ENCODE measurements at regions of chr11 and their contacts with region 1.

Region 1: GRCh38 chr11:103619480-103619879 is 417.0 kb upstream of the DDI1 start:
- DNase-seq: no peak
- ATAC-seq: no peak
- H3K4me3 Mint-ChIP-seq: no peak overlapping the region
- H3K27ac Mint-ChIP-seq: no peak overlapping the region
- H3K4me1 Mint-ChIP-seq: no peaks in the 10 kb centered on the region
- H3K27me3 Mint-ChIP-seq: no peaks in the 10 kb centered on the region
- CTCF ChIP-seq: no peak

Region 2: GRCh38 chr11:103637295-103637694 is 17.8 kb after region 1 on chr11:
- CTCF ChIA-PET with region 1: no interaction called
- POLR2A ChIA-PET with region 1: no interaction called
- intact Hi-C with region 1: no loop called
- DNase-seq: no peak
- ATAC-seq: no peak
- H3K4me3 Mint-ChIP-seq: no peak overlapping the region
- H3K27ac Mint-ChIP-seq: no peak overlapping the region
- H3K4me1 Mint-ChIP-seq: no peaks in the 10 kb centered on the region
- H3K27me3 Mint-ChIP-seq: peaks cover 2% of the 10 kb centered on the region
- CTCF ChIP-seq: no peak

Region 3: DNA sequence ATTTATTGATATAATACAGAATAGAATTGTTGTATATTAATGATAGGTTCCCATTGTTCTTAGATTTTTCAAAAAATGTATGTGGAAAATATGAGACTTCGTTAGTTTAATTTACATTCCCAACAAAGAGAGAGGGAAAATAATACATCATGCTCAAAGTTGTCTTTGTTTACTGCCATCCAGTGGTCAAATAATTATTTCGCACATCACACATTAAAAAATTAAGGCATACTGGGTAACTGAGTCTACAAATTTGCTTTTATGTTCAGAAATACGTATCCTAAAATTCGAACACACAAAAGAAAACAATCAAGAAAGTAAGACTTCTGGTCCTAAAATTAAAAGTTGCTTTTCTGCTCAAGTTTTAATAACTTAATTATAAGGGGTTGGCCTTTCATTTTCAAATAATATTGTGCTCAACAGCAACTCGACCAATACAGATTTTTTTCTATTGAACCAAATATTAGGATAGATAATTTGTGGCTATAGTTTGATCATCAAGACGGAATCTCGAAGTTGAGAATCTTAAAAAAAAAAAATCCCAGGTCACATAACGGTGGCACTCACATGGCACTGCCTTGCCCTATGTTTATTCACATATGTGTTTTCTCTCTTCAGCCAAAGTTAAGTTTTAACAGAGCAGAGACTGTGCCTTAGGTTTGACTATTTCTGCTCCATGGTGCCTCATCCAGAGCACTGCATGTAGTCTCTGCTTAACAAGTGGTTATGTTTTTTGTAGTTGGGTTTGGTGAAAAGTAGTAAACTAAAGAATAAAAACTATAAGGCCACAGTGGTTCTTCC is 532.1 kb after region 1 on chr11:
- CTCF ChIA-PET with region 1: no interaction called
- POLR2A ChIA-PET with region 1: no interaction called
- intact Hi-C with region 1: loop called (anchors 1 kb)
- DNase-seq: no peak
- ATAC-seq: no peak
- H3K4me3 Mint-ChIP-seq: no peak overlapping the region
- H3K27ac Mint-ChIP-seq: no peak overlapping the region
- H3K4me1 Mint-ChIP-seq: peaks cover 9% of the 10 kb centered on the region
- H3K27me3 Mint-ChIP-seq: no peaks in the 10 kb centered on the region
- CTCF ChIP-seq: no peak